GM13976 (cell line): ENCODE measurements at regions of chr6 and their contacts with region 1.

Region 1: GRCh38 chr6:99119109-99120031 is 171.6 kb upstream of the FBXL4 start:
- DNase-seq: peak; percentile 39
- CTCF ChIP-seq: peak; percentile 60

Region 2: DNA sequence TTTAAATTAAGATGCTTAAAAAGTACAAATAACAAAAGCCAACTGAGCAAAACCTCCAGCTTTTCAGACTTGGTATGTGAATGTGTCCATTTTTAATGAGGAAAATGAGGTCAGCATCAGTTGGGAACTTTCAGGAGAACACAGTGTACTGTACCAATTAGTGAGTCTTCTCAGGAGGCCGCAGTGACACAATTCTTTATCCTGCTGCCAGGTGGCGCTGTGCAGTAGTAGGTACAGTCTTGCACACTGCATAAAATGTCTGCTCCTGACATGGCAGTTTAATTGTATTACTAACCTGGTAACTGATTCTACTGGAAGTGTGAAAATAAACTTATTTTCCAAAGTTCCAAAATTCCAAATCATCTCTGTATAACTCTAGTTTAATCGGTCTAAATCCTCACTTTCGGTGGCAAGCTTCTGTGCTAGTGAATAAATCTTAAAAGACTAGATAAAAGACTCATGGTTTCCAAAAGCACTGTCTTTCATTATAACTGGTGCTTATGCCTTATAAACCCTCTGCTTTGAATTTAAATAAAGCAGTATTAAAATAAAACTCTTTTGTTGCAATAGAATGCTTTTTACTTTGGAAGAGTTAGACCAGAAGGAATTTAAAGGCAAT is 1621.5 kb before region 1 on chr6:
- in situ Hi-C with region 1: loop called (anchors 25 kb)
- DNase-seq: peak; percentile 15
- CTCF ChIP-seq: peak; percentile 78

Region 3: DNA sequence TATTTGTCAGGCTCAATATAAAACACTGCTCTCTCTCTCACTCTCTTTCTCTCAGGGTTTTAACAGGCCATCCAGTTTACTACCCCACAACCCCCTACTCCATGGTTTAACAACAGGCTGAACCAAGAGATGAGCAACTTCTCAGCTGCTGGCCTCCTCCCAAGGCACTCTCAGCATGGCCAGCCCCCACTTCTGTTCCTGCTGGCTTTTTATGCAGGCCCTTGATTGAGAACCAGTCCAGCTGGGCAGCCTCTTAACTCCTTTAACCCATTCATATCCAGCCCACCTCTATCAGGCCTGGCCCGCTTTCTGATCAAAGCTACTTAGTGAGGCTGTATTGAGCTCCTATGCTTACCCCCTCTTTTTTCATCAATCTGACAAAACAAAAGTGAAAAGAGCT is 631.8 kb before region 1 on chr6:
- in situ Hi-C with region 1: no loop called
- DNase-seq: no peak
- CTCF ChIP-seq: no peak

Region 4: DNA sequence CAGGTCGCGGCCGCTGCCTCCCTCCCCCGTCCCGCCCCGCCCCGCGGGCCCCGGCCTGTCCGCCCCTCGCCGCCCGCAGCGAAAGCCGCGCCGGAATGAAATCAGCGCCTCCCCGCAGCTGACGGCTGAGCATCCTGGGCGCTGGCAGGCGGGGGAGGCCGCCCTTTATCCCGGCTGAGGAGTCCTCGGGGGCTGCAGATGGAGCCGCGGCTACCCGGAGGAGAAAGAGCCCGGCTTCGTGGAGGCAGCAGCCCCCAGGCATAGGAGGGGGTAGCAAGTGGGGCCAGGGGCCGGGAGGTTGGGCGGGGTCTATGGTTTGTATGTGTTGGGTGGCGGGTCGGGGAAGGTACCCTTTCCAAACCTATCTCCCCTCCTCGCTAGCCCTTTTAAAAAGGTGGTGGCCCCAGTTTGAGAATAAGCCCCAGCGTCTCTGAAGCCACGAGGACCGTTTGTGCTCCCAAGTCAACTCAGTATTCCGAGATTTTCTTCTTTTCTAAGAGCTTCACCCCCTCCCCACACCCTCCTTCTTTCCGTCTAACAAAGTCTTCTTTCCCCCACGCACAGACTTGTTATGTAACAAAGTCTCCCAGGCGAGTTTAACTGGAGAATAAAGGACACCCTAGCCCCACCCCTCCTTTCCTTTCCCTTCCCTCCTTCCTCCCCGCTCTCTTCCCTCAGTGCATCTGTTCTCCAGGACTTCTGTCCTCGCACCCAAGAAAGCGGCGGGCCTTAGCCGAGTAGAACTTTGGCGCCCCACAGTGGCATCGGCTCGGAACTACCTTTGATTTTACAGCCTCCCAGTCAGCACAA is 274.0 kb before region 1 on chr6:
- in situ Hi-C with region 1: loop called (anchors 25 kb)
- DNase-seq: peak; percentile 77
- CTCF ChIP-seq: peak; percentile 89